ENCODE measurements at regions of chr11 and their contacts with region 1.

Region 1: GRCh38 chr11:134223836-134224709 is at the starts of genes NCAPD3 and VPS26B:
- DNase-seq: peak; percentile 93
- ATAC-seq: peak; percentile 85
- H3K4me3 ChIP-seq: peak within 1 kb of the TSS; percentile 70
- H3K27ac ChIP-seq: peak within 1 kb of the TSS; percentile 82
- H3K4me1 ChIP-seq: peaks cover 3% of the 10 kb centered on the region; the same call in 1 of the 2 replicates
- H3K27me3 ChIP-seq: no peaks in the 10 kb centered on the region
- CTCF ChIP-seq: no peak
- POLR2A ChIP-seq: peak; percentile 71
- RAD21 ChIP-seq: no peak
- total RNA-seq, gene NCAPD3: 19.2 and 19.7 TPM in 2 replicates
- total RNA-seq, gene VPS26B: 38.9 and 51.1 TPM in 2 replicates

Region 2: GRCh38 chr11:133927690-133928627 is 296.1 kb before region 1 on chr11:
- CTCF ChIA-PET with region 1: no interaction called
- POLR2A ChIA-PET with region 1: no interaction called
- dilution Hi-C with region 1: no loop called
- in situ Hi-C with region 1: no loop called
- intact Hi-C with region 1: loop called (anchors 10 kb)
- DNase-seq: peak; percentile 39
- ATAC-seq: peak; percentile 99
- H3K4me3 ChIP-seq: no peak overlapping the region
- H3K27ac ChIP-seq: no peak overlapping the region
- H3K4me1 ChIP-seq: no peaks in the 10 kb centered on the region
- H3K27me3 ChIP-seq: no peaks in the 10 kb centered on the region
- CTCF ChIP-seq: peak; percentile 81
- POLR2A ChIP-seq: no peak
- RAD21 ChIP-seq: peak; percentile 87

Region 3: DNA sequence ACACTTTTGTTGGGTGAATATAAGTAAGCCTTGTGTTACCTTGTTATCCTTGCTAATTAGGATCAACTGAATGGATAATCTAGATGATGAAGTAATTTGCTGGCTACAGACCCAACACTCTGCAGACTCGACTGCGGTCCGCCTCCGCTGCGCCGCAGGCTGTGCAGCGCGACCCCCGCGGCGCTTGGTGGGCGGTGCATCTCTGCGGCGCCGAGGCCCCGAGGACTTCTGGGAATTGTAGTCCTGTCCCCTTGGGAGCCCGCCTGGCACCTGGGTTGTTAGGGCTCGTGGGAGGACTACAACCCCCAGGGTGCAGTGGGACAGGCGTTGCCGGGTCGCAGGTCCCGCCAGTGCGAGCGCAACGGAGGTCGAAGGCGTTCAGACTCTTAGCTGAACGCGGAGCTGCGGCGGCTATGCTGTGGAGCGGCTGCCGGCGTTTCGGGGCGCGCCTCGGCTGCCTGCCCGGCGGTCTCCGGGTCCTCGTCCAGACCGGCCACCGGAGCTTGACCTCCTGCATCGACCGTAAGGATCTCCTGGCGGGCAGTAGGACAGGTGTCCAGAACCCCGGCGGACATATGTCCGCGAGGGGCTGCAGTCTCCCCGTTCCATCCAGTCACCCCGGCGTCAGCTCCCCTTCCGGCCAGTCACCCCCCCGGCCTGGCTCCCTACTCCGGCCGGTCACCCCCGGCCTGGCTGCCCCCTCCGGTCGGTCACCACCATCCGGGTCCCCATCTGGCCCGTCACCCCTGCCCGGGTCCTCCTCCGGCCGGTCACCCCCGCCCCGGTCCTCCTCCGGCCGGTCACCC is 29.3 kb after region 1 on chr11 and contains the starts of genes ACAD8 and THYN1:
- CTCF ChIA-PET with region 1: no interaction called
- POLR2A ChIA-PET with region 1: no interaction called
- dilution Hi-C with region 1: no loop called
- in situ Hi-C with region 1: no loop called
- intact Hi-C with region 1: loop called (anchors 1 kb)
- DNase-seq: peak; percentile 95
- ATAC-seq: peak; percentile 99
- H3K4me3 ChIP-seq: peak within 1 kb of the TSS; percentile 61
- H3K27ac ChIP-seq: peak within 1 kb of the TSS; percentile 41
- H3K4me1 ChIP-seq: no peaks in the 10 kb centered on the region; the same call in 1 of the 2 replicates
- H3K27me3 ChIP-seq: no peaks in the 10 kb centered on the region
- CTCF ChIP-seq: no peak
- POLR2A ChIP-seq: 0 out of 2 replicates have a peak, but pooled peaks have one; percentile 22
- RAD21 ChIP-seq: no peak
- total RNA-seq, gene ACAD8: 9.7 and 11.1 TPM in 2 replicates
- total RNA-seq, gene THYN1: 51.9 and 72.1 TPM in 2 replicates